Prostate gland (tissue), 2 donors: ENCODE measurements at regions of chr19 and their contacts with region 1.

Region 1: DNA sequence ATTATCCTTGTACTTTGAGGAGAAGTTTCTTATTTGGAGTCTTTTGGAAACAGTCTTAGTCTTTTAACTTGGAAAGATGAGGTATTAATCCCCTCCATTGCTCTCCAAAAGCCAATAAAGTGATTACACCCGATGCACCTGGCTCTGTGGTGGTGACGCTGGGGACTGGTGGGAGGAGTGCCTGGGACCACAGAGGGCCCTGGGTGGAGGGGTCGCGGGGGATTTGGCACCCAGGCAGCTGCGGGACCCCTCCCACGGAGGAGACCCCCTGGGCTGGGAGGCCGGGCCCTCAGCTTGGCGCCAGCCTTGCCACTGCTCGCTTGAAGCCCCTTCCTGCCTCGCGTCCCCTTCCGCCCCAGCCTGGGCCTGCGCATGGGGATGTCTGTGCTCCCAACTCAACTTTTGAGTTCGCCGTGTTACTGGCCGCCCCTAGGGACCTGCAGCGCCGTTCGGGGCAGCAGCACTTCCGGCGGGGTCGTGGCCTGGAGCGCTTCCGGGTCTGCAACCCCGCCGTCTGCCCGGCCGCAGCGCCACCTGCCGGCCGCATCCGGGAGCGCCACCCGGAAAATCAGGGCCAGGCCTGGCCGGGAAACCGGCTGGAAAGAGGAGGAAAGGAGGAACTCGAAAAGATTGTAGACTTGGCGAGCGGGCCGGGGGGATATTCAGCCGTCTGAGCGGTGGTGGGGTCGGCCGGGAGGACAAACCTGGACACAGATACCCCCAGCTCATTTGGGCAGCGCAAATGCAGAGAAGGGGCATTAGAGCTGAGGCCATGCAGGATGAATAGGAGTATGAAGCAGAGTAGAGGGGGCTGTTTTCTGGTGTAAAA is 8.4 kb downstream of the PEAK3 start:
- DNase-seq: peak; percentile 47
- H3K4me3 ChIP-seq: peak overlapping the region in 1 of 2 donors; percentile 15
- H3K27ac ChIP-seq: peak overlapping the region; percentile 50 to 60
- H3K4me1 ChIP-seq: peaks cover 19% of the 10 kb centered on the region
- H3K27me3 ChIP-seq: no peaks in the 10 kb centered on the region
- CTCF ChIP-seq: peak; percentile 95 to 99 (median 98)
- POLR2A ChIP-seq: peak; percentile 14

Region 2: GRCh38 chr19:1807722-1808397 is 465.7 kb before region 1 on chr19:
- intact Hi-C with region 1: no loop called
- DNase-seq: no peak
- H3K4me3 ChIP-seq: no peak overlapping the region
- H3K27ac ChIP-seq: no peak overlapping the region
- H3K4me1 ChIP-seq: peaks cover 6% of the 10 kb centered on the region
- H3K27me3 ChIP-seq: no peaks in the 10 kb centered on the region
- CTCF ChIP-seq: no peak
- POLR2A ChIP-seq: no peak

Region 3: DNA sequence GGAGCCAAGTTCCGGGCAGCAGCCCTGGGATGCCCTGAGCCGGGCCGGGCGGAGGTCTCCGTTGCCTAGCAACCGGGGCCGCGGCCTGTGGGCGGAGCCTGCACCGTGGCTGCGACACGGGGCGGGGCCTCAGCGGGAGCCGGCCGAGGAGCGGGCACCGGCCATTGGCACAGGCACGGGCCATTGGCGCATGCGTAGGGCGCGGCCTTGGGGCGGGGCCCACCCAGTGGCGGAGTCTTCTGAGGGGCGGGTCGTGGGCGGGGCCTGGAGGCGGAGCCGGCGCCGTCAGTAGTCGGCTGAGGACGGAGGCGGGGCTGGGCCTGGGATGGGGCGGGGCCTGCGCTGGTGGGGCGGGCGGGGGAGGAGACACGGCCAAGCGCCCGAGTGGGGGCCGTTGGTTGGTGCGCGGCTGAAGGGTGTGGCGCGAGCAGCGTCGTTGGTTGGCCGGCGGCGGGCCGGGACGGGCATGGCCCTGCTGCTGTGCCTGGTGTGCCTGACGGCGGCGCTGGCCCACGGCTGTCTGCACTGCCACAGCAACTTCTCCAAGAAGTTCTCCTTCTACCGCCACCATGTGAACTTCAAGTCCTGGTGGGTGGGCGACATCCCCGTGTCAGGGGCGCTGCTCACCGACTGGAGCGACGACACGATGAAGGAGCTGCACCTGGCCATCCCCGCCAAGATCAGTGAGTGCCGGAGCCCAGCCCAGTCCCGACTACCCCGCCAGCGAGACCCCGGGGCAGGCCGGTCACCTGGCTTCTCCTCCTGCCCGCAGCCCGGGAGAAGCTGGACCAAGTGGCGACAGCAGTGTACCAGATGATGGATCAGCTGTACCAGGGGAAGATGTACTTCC is 176.9 kb before region 1 on chr19 and contains the start of gene IZUMO4:
- intact Hi-C with region 1: loop called (anchors 5 kb)
- DNase-seq: peak; percentile 99
- H3K4me3 ChIP-seq: peak within 1 kb of the TSS; percentile 77 to 81
- H3K27ac ChIP-seq: peak within 1 kb of the TSS; percentile 91 to 96
- H3K4me1 ChIP-seq: peaks cover 20% of the 10 kb centered on the region
- H3K27me3 ChIP-seq: no peaks in the 10 kb centered on the region
- CTCF ChIP-seq: peak in 3 of 4 experiments; percentile 34 to 63 (median 62)
- POLR2A ChIP-seq: peak; percentile 59
- total RNA-seq, gene IZUMO4: 11.8 to 50.2 TPM

Region 4: DNA sequence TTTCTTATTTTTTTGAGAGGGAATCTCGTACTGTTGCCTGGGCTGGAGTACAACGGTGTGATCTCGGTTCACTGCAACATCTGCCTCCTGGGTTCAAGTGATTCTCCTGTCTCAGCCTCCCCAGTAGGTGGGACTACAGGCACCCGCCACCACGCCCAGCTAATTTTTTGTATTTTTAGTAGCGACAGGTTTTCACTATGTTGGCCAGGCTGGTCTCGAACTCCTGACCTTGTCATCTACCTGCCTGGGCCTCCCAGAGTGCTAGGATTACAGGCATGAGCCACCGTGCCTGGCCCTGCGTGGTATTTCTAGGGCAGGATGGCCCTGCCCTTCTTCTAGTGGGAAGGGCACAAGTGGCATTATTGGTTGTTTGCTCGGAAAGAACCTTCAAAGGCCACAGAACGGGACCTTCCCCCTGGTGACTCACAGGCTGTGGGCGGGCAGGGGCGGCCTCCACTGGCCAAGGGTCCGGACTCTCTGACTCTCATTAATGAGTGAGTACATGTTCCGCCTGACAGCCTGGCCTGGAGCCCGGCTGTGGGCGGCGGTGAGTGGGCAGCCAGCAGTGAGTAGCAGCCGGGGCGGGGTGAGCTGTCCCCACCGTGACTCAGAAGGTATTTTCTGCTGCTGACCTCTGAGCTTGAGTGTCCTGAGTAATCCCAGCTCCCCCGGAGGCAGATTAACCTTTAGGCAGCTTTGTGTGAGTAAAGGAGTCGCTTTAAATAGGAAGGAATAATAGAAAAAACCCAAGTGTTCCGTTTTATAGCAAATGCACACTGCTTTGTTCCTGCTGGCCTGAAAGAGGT is 104.7 kb before region 1 on chr19:
- intact Hi-C with region 1: loop called (anchors 5 kb)
- DNase-seq: peak; percentile 93
- H3K4me3 ChIP-seq: no peak overlapping the region
- H3K27ac ChIP-seq: peak overlapping the region; percentile 76 to 89
- H3K4me1 ChIP-seq: peaks cover 26% of the 10 kb centered on the region
- H3K27me3 ChIP-seq: no peaks in the 10 kb centered on the region
- CTCF ChIP-seq: no peak
- POLR2A ChIP-seq: peak; percentile 64

Region 5: GRCh38 chr19:2207991-2208860 is 65.3 kb before region 1 on chr19:
- intact Hi-C with region 1: no loop called
- DNase-seq: no peak
- H3K4me3 ChIP-seq: no peak overlapping the region
- H3K27ac ChIP-seq: no peak overlapping the region
- H3K4me1 ChIP-seq: no peaks in the 10 kb centered on the region
- H3K27me3 ChIP-seq: no peaks in the 10 kb centered on the region
- CTCF ChIP-seq: no peak
- POLR2A ChIP-seq: no peak

Region 6: DNA sequence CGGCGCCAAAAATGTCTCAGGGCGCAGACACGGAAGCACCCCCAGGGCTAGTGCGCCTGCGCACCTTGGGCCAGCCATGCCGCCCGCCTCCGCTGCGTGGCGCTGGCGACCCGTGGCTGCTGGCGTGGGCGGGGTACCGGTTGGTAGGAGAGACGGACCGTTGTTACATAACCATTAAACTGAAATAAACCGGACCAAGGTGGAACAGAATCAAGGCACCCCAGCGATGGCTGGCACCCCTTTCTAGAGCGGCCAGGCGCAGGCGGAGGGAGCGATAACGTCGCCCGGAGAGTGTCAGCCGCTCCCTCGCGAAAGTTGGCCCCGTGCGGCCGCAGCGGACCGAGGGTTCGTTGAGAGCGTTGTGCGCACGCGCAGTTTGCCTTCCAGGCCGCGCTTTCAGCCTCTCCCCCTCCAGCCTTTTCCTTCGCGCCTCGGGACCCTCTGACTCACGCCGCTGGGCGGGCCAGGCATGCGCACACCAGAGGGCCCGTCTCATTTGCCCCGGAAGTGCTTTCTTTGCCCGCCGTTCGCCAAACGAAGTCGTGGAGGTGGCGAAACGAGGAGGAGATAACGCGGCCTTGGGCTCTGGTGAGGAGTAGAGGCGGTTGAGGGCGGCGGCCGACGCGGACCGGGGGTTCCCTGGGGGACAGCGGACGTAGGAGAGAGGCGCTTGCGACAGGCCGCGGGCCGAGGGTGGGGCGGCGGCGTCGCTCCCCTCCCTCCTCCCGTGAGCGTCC is 37.1 kb before region 1 on chr19 and contains the starts of genes PLEKHJ1 and SF3A2:
- intact Hi-C with region 1: loop called (anchors 2 kb)
- DNase-seq: peak; percentile 91
- H3K4me3 ChIP-seq: peak within 1 kb of the TSS; percentile 81 to 95
- H3K27ac ChIP-seq: peak within 1 kb of the TSS; percentile 97 to 98
- H3K4me1 ChIP-seq: peaks cover 26% of the 10 kb centered on the region
- H3K27me3 ChIP-seq: no peaks in the 10 kb centered on the region
- CTCF ChIP-seq: peak; percentile 99 to 100 (median 100)
- POLR2A ChIP-seq: peak; percentile 64
- total RNA-seq, gene PLEKHJ1: 59.4 to 91.7 TPM
- total RNA-seq, gene SF3A2: 31.9 to 113 TPM

Region 7: GRCh38 chr19:2315818-2316353 is 42.3 kb after region 1 on chr19:
- intact Hi-C with region 1: loop called (anchors 5 kb)
- DNase-seq: peak; percentile 25
- H3K4me3 ChIP-seq: no peak overlapping the region
- H3K27ac ChIP-seq: no peak overlapping the region
- H3K4me1 ChIP-seq: no peaks in the 10 kb centered on the region
- H3K27me3 ChIP-seq: peaks cover 8% of the 10 kb centered on the region
- CTCF ChIP-seq: peak in 3 of 4 experiments; percentile 35 to 54 (median 54)
- POLR2A ChIP-seq: no peak

Region 8: DNA sequence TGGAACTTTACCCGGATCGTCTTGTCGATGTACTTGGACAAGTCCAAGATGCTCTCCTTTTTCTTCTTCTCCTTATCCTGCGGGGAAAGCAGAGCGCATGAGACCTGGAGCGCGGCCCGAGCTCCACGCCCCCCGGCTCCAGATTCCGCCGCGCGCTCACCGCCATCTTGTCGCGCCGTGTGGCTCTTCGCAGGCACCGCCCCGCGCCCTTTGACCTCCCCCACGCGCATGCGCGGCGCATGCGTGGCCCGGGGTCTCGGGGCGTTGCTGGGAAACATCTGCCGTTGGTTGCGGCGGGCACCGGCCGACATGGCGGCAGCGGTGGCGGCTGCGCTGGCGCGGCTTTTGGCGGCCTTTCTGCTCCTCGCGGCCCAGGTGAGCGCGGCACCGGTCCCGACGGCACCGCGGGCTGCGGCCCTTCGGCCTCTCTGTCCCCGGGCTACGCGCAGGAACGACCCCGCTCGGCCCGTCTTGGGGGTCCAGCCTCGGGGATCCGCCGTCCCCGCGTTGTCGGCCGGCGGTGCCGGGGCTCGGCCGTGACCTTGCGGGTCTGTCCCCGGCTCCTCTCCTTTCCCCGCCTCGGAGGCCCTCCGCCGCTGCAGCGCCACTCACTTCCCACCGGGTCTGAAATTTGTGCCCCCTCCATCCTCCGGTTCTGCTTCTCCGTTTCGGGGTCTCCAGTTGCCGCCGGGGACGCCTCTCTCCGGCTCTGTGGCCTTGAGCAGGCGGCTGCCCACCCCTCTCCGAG is 55.0 kb after region 1 on chr19 and contains the starts of genes LSM7 and SPPL2B:
- intact Hi-C with region 1: no loop called
- DNase-seq: peak; percentile 86
- H3K4me3 ChIP-seq: peak within 1 kb of the TSS; percentile 85 to 94
- H3K27ac ChIP-seq: peak within 1 kb of the TSS; percentile 61
- H3K4me1 ChIP-seq: peaks cover 14% of the 10 kb centered on the region
- H3K27me3 ChIP-seq: no peaks in the 10 kb centered on the region
- CTCF ChIP-seq: peak in 1 of 4 experiments; percentile 37
- POLR2A ChIP-seq: peak; percentile 73
- total RNA-seq, gene LSM7: 125 to 135 TPM
- total RNA-seq, gene SPPL2B: 54.0 to 87.1 TPM

Region 9: GRCh38 chr19:2385053-2385721 is 111.6 kb after region 1 on chr19:
- intact Hi-C with region 1: loop called (anchors 5 kb)
- DNase-seq: peak; percentile 70
- H3K4me3 ChIP-seq: peak overlapping the region in 1 of 2 donors; percentile 15
- H3K27ac ChIP-seq: no peak overlapping the region
- H3K4me1 ChIP-seq: no peaks in the 10 kb centered on the region
- H3K27me3 ChIP-seq: no peaks in the 10 kb centered on the region
- CTCF ChIP-seq: peak in 1 of 4 experiments; percentile 24
- POLR2A ChIP-seq: peak; percentile 16

Region 10: GRCh38 chr19:2610637-2611482 is 337.3 kb after region 1 on chr19:
- intact Hi-C with region 1: no loop called
- DNase-seq: peak; percentile 91
- H3K4me3 ChIP-seq: peak overlapping the region; percentile 28 to 41
- H3K27ac ChIP-seq: peak overlapping the region; percentile 77 to 83
- H3K4me1 ChIP-seq: no peaks in the 10 kb centered on the region
- H3K27me3 ChIP-seq: no peaks in the 10 kb centered on the region
- CTCF ChIP-seq: peak; percentile 92 to 99 (median 98)
- POLR2A ChIP-seq: peak; percentile 16